ENCODE measurements at regions of chr4 and their contacts with region 1.

Region 1: GRCh38 chr4:87093443-87094123 is 126.8 kb downstream of the KLHL8 start:
- DNase-seq: no peak
- ATAC-seq: peak; percentile 78

Region 2: DNA sequence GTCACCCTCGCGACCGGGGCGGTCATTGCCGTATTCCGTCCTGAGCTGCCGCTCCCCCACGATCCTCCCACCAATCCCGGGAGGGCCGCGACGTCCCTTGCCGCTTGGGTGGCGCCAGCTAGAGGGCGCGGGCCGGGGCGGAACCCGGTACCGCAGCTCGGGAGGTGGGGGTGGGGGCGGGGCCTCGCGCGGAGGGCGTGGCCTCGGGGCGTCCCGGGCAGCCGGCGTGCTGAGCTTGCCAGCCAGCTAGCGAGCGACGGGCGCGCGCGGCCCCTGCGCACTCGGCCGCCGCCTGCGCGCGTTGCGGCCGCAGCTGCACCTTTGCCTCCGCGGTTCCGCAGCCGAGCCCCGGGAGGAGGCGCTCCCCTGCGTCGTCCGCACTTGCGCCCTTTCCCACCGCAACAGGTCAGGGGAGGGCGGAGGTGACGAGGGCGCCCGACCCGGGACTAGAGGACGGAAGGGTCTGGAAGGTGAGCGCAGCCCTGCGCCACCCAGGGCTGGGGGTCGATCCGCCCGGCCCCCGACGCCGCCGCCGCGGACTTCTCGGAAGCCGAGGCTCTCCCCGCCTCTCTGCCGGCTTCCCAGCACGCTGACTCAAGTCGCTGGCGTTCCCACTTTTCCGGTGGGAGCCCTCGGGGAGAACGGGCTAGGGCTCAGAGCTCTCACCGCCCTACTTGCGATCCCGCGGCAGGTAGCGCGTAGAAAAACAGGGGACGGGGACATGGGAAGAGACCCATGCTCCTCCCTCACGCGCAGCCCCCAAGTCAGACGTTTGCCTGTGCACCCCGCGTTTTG is 158.6 kb before region 1 on chr4 and contains the start of gene AFF1:
- intact Hi-C with region 1: loop called (anchors 5 kb)
- DNase-seq: peak; percentile 96
- ATAC-seq: peak; percentile 94
- total RNA-seq, gene AFF1: 77.8 TPM

Region 3: DNA sequence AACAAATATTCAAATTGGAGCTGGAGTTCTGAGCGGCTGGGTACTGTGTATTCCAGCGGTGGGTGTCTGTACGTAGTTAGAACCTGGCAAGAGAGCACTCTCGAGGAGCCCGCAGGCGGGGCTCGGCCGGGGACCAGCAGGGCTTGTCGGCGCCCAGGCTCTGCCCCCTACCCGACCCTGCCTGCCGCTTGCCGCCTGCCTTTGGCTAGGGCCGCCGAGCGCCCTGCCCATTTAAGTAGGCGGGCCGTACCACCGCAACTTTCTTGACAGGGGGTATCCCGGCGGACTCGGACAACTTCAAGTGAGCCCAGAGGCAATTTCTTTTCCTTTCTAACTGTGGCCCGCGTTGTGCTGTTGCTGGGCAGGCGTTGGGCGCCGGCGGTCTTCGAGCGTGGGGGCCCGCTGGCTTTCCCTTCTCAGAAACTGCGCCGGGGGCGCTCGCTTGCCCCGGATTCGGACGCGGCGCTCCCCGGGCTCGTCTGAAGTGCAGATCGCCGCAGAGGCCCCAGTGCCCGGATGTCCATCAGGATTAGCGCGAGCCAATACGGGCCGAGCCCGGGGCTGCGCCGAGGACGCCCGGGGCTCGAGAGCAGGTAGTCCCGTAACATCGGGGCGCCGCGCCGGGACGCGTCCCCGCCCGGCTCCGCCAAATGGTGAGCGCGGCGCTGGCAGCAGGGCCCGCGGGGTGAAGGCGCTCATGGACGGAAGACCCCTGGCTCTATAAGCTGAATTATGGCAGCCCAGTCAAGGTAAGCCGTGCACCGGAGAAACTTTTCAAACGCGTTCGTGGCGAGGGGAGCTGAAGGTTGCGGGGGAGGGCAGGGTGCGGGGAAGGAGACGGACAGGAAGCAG is 86.7 kb before region 1 on chr4:
- intact Hi-C with region 1: loop called (anchors 5 kb)
- DNase-seq: peak; percentile 96
- ATAC-seq: peak; percentile 94